Activated T-helper 1 cell treated with anti-CD3 and anti-CD28 coated beads, Interleukin-12 subunit alpha, Interleukin-12 subunit beta, Interleukin-2, Interleukin-4 antibody, amounts not matched to agents 30 ng/mL and 10 ng/mL and 1 ng/mL, durations not matched to agents 14 hours and 24 hours and 36 hours (primary cell): ENCODE measurements at regions of chr17 and their contacts with region 1.

Region 1: DNA sequence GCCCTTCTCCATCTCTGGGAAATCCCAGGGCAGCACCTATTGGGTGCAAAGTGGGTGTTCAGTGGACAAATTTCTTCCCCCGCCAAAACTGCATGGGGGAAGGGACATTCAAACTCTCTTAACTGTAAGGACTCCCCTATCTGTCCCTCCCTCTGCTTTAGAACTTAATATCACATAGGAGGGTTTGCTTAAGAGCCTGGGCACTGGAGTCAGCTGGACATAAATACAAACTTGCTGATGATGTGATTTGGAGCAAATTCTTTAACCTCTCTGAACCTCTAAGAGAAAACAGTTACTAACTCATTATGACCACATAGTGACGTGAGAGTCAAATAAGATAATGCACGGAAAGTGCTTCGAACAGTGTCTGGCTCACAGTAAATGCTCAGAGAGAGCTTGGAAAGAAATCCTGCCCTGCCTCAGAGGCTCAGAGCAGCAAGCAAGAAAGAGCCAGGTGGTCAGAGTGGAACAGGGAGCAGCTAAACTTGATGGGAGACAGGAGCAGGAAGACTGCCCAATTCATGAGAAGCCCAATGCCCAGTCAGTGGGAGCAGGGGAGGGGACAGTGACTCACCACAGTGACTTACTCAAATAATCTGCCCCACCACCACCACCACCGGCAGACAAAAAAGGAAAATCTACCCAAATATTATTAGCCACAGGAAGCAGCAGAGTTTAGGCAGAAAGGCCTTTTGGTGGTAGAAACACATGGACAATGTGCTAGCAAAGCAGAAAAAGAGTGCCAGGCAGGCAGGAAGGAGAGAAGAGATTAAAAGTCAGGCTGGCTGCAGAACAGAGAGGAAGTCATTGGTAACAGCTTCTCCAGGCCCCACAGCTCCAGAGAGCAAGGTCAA is 23.9 kb upstream of the CCL1 start:
- DNase-seq: no peak
- H3K4me3 Mint-ChIP-seq: peak overlapping the region; percentile 51
- H3K27ac Mint-ChIP-seq: peak overlapping the region; percentile 92
- H3K4me1 Mint-ChIP-seq: peaks cover 86% of the 10 kb centered on the region
- H3K27me3 Mint-ChIP-seq: peaks cover 12% of the 10 kb centered on the region

Region 2: GRCh38 chr17:34220754-34221395 is 166.0 kb before region 1 on chr17:
- intact Hi-C with region 1: no loop called
- DNase-seq: no peak
- H3K4me3 Mint-ChIP-seq: no peak overlapping the region
- H3K27ac Mint-ChIP-seq: no peak overlapping the region
- H3K4me1 Mint-ChIP-seq: no peaks in the 10 kb centered on the region
- H3K27me3 Mint-ChIP-seq: peaks cover 13% of the 10 kb centered on the region

Region 3: DNA sequence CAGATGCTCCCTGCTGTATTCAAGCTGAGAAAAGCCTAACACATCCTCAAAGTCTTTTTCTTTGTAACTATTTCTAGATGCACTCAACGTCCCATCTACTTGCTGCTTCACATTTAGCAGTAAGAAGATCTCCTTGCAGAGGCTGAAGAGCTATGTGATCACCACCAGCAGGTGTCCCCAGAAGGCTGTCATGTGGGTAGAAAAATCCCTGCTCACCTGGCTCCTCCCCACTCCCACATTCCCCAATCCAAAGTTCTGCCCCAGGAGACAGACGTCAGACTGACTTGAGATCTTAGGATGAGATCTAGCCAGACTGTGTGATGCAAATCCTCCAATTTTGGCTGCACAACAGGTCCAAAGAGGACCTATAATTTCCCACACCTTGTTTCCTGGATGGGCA is 29.5 kb before region 1 on chr17:
- intact Hi-C with region 1: no loop called
- DNase-seq: no peak
- H3K4me3 Mint-ChIP-seq: no peak overlapping the region
- H3K27ac Mint-ChIP-seq: no peak overlapping the region
- H3K4me1 Mint-ChIP-seq: peaks cover 18% of the 10 kb centered on the region
- H3K27me3 Mint-ChIP-seq: peaks cover 32% of the 10 kb centered on the region

Region 4: GRCh38 chr17:34370997-34371395 is 15.9 kb before region 1 on chr17:
- intact Hi-C with region 1: loop called (anchors 2 kb)
- DNase-seq: no peak
- H3K4me3 Mint-ChIP-seq: peak overlapping the region; percentile 20
- H3K27ac Mint-ChIP-seq: peak overlapping the region; percentile 8
- H3K4me1 Mint-ChIP-seq: peaks cover 39% of the 10 kb centered on the region
- H3K27me3 Mint-ChIP-seq: peaks cover 26% of the 10 kb centered on the region